Esophagus muscularis mucosa (tissue), 4 donors: ENCODE measurements at regions of chr1 and their contacts with region 1.

Region 1: DNA sequence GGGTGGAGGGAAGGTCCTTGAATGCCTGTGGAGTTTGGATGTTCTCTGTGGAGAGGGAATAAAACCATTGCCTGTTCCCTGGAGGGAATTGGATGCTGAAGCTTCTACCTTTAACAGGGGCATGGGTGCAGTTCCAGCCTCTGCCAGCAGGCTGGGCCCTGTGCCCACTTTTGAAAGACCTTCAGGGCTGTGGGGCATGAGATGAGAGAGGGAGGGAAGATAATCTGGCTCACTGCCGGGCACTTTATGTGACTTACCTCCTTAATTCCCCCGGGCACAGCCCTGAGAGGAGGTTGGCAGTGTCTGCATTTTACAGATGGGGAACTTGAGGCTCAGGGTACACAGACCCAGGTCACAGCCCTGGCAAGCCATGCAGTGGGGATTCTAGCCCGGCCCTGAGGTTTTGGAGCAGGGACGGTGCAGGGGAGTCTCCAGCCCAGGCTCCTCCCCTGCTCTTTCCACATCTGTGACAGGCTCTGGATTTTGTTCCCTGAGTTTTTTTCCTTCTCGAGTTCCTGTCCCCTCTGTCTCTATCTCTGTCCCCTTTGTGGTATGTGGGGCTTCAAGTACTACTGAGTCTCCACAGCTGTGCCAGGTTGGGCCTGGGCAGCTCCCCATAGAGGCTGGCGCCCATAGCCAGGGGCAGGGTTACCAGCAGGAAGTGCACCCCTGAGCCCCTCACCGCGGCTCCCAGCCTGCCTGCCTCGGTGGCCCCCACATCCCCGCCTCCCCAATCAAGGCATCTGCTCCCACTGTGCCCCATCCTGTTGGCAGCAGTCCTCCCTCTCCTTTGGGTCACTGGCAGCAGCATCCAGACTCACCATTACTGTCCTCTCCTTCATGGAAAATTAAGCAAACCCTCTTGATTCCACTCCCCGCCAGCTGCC is 14.0 kb upstream of the THEMIS2 start:
- DNase-seq: no peak
- H3K4me3 ChIP-seq: peak overlapping the region in 1 of 4 donors; percentile 2
- H3K27ac ChIP-seq: no peak overlapping the region
- H3K4me1 ChIP-seq: peaks cover 6 to 17% (median 13%) of the 10 kb centered on the region in 4 donors
- H3K27me3 ChIP-seq: no peaks in the 10 kb centered on the region
- CTCF ChIP-seq: peak; percentile 76 to 94 (median 93)
- EP300 ChIP-seq: no peak
- POLR2A ChIP-seq: no peak

Region 2: DNA sequence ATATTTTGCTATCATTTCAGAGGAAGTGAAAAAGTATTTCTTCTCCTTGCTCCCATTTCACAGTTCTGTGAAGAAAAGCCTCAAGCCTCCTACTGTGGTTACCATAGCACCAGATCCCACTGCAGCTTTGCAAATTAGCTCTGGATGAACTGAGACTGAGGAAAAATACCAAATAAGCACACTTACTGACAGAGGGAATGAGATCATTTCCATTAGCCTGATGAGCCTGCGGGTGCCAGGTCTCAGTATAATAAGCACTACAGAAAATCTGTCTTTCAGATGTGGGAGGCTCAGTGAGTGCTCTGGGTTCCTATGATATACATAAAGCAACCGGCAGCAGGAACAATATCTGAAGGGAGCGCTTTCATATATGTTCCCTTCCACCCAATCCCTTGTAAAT is 122.8 kb after region 1 on chr1:
- intact Hi-C with region 1: loop called (anchors 5 kb)
- DNase-seq: no peak
- H3K4me3 ChIP-seq: no peak overlapping the region
- H3K27ac ChIP-seq: peak overlapping the region in 1 of 4 donors; percentile 2
- H3K4me1 ChIP-seq: peaks cover 6 to 24% (median 18%) of the 10 kb centered on the region in 4 donors
- H3K27me3 ChIP-seq: no peaks in the 10 kb centered on the region
- CTCF ChIP-seq: no peak
- EP300 ChIP-seq: no peak
- POLR2A ChIP-seq: no peak